SK-N-SH (cell line): ENCODE measurements at regions of chr20 and their contacts with region 1.

Region 1: GRCh38 chr20:9392892-9393857 is 121.2 kb upstream of the LAMP5 start:
- DNase-seq: peak; percentile 77
- H3K4me3 ChIP-seq: peak overlapping the region in 1 of 2 experiments; percentile 32; a peak in 1 of 4 replicates
- H3K27ac ChIP-seq: no peak overlapping the region
- H3K4me1 ChIP-seq: no peaks in the 10 kb centered on the region
- H3K27me3 ChIP-seq: no peaks in the 10 kb centered on the region
- CTCF ChIP-seq: peak; percentile 80
- EP300 ChIP-seq: no peak
- RAD21 ChIP-seq: peak; percentile 85

Region 2: GRCh38 chr20:8756410-8756809 is 636.8 kb before region 1 on chr20:
- CTCF ChIA-PET with region 1: interaction called, 12 read pairs
- POLR2A ChIA-PET with region 1: no interaction called
- DNase-seq: no peak
- H3K4me3 ChIP-seq: no peak overlapping the region
- H3K27ac ChIP-seq: peak overlapping the region; percentile 30 to 96
- H3K4me1 ChIP-seq: peaks cover 0 to 16% of the 10 kb centered on the region in 2 experiments
- H3K27me3 ChIP-seq: no peaks in the 10 kb centered on the region
- CTCF ChIP-seq: no peak
- EP300 ChIP-seq: peak in 1 of 2 experiments; percentile 76; a peak in 1 of 4 replicates
- RAD21 ChIP-seq: no peak

Region 3: GRCh38 chr20:8790442-8791074 is 602.6 kb before region 1 on chr20:
- CTCF ChIA-PET with region 1: interaction called, 15 read pairs
- POLR2A ChIA-PET with region 1: no interaction called
- DNase-seq: peak; percentile 50
- H3K4me3 ChIP-seq: no peak overlapping the region; a peak in 1 of 4 replicates
- H3K27ac ChIP-seq: peak overlapping the region in 1 of 2 experiments; percentile 31; a peak in 2 of 4 replicates
- H3K4me1 ChIP-seq: no peaks in the 10 kb centered on the region; a peak in 1 of 4 replicates
- H3K27me3 ChIP-seq: no peaks in the 10 kb centered on the region
- CTCF ChIP-seq: peak; percentile 98
- EP300 ChIP-seq: no peak
- RAD21 ChIP-seq: peak; percentile 84

Region 4: DNA sequence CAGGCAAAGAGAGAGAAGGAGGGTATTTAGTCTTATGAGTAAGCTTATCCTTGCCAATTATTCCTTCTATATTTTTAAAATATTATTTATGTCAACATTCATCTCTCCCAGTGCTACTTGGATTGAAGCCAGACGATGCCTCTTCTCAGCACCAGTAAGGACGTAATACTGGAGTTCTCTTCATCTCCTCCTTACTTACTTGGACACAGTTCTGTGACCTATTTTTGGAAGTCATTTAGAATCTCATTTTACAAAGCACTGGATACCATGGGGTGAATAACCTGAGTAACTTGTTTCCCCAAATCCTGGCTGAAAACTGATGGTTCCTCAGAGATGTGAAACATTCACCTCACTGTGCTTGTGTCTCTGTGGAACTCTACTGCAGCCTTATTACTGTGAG is 16.2 kb before region 1 on chr20:
- CTCF ChIA-PET with region 1: interaction called, 16 read pairs
- POLR2A ChIA-PET with region 1: no interaction called
- DNase-seq: no peak
- H3K4me3 ChIP-seq: no peak overlapping the region
- H3K27ac ChIP-seq: no peak overlapping the region
- H3K4me1 ChIP-seq: no peaks in the 10 kb centered on the region; a peak in 1 of 4 replicates
- H3K27me3 ChIP-seq: no peaks in the 10 kb centered on the region
- CTCF ChIP-seq: no peak
- EP300 ChIP-seq: no peak
- RAD21 ChIP-seq: no peak